ENCODE measurements at regions of chr2 and their contacts with region 1.

Region 1: DNA sequence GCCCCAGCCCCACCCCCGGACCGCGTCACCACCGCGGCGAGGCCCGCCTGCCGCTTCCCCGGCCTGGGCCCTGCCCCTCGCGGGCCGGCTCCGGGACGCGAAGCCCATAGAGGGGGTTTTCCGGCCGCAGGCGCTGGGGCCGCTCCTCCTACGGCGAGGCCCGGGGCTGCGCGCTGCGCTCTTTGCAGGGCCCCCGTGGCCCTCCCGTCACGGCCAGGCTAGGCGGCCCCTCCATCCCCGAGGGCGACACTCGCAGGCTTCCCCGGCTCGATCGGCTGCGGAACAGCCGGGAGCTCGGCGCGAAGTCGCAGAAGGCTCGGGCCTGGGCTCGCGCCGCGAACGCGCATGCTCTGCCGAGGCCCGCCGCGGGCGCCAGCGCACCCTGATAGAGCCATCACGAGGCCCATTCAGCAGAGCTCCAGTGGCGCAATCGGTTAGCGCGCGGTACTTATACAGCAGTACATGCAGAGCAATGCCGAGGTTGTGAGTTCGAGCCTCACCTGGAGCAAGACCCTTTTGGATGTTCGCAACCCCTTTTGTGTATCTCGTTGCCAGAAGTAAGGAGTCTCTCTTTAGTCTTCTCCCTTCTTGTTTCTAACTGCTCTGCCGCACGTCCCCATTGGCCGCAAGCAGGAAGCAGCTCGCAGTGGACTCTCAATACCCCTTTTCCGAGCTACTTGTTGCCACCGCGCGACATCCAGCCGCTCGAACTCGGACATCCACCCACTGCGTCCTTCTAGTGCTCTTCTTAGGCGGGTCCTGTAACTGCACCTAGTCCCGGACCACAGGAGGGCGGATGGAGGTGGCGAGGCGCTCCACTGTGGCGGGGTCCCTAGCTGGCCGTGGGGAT is 18.0 kb upstream of the HAAO start:
- DNase-seq: peak; percentile 98
- ATAC-seq: peak; percentile 78
- H3K4me3 ChIP-seq: peak overlapping the region; percentile 62 to 97 (median 84)
- H3K4me3 Mint-ChIP-seq: peak overlapping the region; percentile 100
- H3K27ac ChIP-seq: peak overlapping the region; percentile 95
- H3K27ac Mint-ChIP-seq: peak overlapping the region; percentile 99
- H3K4me1 ChIP-seq: peaks cover 4 to 17% of the 10 kb centered on the region in 2 donors
- H3K4me1 Mint-ChIP-seq: peaks cover 25% of the 10 kb centered on the region
- H3K27me3 ChIP-seq: no peaks in the 10 kb centered on the region
- H3K27me3 Mint-ChIP-seq: no peaks in the 10 kb centered on the region
- CTCF ChIP-seq: no peak

Region 2: GRCh38 chr2:42568401-42569115 is 241.8 kb before region 1 on chr2 and contains the start of gene MTA3:
- CTCF ChIA-PET with region 1: interaction called, 3 read pairs
- POLR2A ChIA-PET with region 1: no interaction called
- intact Hi-C with region 1: loop called (anchors 5 kb)
- DNase-seq: peak; percentile 74
- ATAC-seq: peak; percentile 67
- H3K4me3 ChIP-seq: peak within 1 kb of the TSS; percentile 26 to 80 (median 70)
- H3K4me3 Mint-ChIP-seq: peak within 1 kb of the TSS; percentile 96
- H3K27ac ChIP-seq: peak within 1 kb of the TSS; percentile 18 to 67
- H3K27ac Mint-ChIP-seq: peak within 1 kb of the TSS; percentile 90
- H3K4me1 ChIP-seq: peaks cover 21 to 26% of the 10 kb centered on the region in 2 donors
- H3K4me1 Mint-ChIP-seq: peaks cover 31% of the 10 kb centered on the region
- H3K27me3 ChIP-seq: no peaks in the 10 kb centered on the region
- H3K27me3 Mint-ChIP-seq: no peaks in the 10 kb centered on the region
- CTCF ChIP-seq: no peak
- total RNA-seq, gene MTA3: 33.2 and 40.1 TPM in 2 replicates

Region 3: DNA sequence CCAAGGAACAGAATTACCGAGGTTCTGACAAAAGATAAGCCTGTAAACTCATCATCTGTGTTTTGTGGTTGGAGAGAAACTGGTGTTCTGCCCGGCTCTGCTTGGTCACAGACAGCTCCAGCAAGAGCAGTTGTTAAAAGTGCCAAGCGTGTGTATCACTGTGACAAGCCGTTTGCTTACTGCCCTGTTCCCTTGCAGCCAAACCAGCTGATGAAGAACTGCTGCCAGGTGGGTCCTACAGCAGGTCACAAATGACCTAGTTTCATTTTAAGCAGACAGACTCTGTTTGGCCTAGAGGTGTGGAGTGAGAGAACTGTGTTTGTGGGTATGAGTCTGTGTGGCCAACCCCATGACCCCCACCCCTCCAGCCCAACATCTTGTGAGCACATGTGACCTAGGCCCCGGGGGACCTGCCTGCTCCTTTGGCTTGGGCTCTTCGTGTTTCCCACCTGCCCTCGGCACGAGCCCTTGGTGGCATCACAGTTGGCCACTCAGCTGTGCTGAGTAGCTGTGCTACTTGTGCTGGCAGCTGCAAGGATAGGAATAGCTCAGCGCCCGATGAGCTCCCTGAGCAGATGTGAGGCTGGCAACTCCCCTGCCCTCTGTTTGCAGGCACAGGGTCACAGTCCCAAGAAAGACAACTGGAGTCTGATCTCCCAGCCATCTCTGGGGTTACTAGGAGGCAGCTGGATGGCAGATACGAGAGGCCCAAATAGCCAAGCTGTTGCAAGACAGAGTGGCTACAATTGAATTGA is 56.1 kb before region 1 on chr2:
- CTCF ChIA-PET with region 1: interaction called, 5 read pairs
- POLR2A ChIA-PET with region 1: interaction called, 15 read pairs
- intact Hi-C with region 1: loop called (anchors 1 kb)
- DNase-seq: peak; percentile 85
- ATAC-seq: peak; percentile 81
- H3K4me3 ChIP-seq: peak overlapping the region in 2 of 5 experiments; percentile 19 to 38
- H3K4me3 Mint-ChIP-seq: peak overlapping the region; percentile 78
- H3K27ac ChIP-seq: peak overlapping the region; percentile 37 to 50
- H3K27ac Mint-ChIP-seq: peak overlapping the region; percentile 89
- H3K4me1 ChIP-seq: peaks cover 46 to 47% of the 10 kb centered on the region in 2 donors
- H3K4me1 Mint-ChIP-seq: peaks cover 47% of the 10 kb centered on the region
- H3K27me3 ChIP-seq: no peaks in the 10 kb centered on the region
- H3K27me3 Mint-ChIP-seq: no peaks in the 10 kb centered on the region
- CTCF ChIP-seq: no peak

Region 4: DNA sequence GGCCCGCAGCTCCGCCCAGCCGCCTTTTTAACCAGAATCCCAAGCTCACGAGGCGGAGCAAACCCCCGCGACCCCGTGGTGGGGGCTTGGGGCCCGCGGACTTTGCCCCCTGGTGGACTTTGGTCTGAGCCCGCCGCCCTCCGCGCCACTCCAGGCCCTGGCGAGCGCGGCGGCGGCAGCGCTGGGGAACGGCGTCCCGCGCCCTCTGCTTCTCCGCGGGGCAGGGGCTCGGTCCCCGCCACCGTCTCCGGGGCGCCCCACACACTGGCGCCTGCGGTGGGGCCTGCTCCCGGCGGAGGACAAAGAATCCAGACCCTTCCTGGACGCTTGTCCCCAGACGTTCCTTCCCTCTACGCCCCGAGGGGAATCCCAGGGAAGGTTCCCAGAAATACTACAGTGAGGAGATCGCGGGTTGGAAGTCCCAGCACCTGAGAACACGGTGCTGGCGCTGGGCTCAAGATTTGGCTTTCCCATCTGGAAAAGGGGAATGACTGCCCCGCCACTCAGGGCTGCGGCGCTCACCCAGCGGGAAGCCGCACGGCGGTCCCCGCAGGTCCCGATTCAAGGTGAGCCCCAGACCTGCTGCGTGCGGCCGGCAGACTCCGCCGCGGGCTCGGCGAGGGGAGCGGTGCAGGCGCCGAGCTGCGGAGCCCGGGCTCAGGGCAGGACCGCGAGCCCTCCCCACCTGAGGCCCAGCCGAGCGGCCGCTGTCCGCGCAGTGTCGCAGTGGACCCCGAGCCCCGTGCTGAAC is 17.6 kb before region 1 on chr2 and contains the start of gene HAAO:
- CTCF ChIA-PET with region 1: interaction called, 64 read pairs
- POLR2A ChIA-PET with region 1: interaction called, 82 read pairs
- intact Hi-C with region 1: loop called (anchors 1 kb)
- DNase-seq: peak; percentile 74
- ATAC-seq: peak; percentile 61
- H3K4me3 ChIP-seq: peak within 1 kb of the TSS; percentile 47 to 93 (median 76)
- H3K4me3 Mint-ChIP-seq: peak within 1 kb of the TSS; percentile 87
- H3K27ac ChIP-seq: peak within 1 kb of the TSS; percentile 49 to 69
- H3K27ac Mint-ChIP-seq: peak within 1 kb of the TSS; percentile 89
- H3K4me1 ChIP-seq: peaks cover 18 to 37% of the 10 kb centered on the region in 2 donors
- H3K4me1 Mint-ChIP-seq: peaks cover 46% of the 10 kb centered on the region
- H3K27me3 ChIP-seq: no peaks in the 10 kb centered on the region
- H3K27me3 Mint-ChIP-seq: no peaks in the 10 kb centered on the region
- CTCF ChIP-seq: peak; percentile 11
- total RNA-seq, gene HAAO: 17.6 and 21.0 TPM in 2 replicates

Region 5: DNA sequence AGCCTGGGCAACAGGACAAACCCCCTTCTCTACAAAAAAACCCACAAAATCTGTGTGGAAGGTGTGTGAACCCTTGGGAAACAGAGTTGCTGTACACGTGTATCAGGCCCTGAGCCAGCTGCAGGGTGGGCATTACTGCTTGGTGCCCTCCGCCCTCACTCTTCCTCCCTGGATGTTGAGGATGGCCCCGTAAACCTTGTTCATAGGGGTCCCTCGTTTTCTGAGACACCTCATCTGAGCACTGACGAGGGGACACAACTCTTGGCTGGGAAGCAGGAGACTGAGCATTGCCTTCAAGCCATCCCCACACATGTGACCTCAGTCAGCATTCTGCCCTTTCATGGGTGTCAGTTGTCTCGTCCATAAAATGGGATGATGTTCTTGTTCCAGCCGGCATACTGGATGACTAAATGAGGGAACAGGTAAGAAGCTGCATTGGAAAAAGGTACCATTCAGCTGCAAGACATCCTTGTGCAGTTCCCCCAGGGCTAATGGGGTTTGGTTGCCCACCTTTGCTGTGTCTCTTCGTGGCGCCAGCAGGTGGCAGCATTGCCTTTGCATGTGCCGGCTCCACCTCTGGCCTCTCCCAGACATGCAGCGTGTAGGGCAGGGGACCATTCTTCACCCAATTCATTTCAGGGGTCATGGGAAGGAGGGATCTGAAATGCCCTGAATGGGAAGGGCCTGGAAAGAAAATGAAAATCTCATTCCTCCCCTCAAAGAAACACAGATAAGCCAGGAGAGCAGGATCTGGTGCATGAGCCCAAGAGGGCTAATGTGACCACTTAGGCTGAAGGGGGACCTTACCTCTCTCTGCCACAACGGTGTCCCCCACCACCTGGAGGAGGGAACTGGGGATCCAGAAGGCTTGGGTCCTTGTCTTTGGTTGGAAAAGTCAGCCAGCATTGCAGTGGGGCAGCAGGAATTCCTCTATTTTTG is 18.4 kb after region 1 on chr2:
- CTCF ChIA-PET with region 1: interaction called, 17 read pairs
- POLR2A ChIA-PET with region 1: interaction called, 3 read pairs
- intact Hi-C with region 1: loop called (anchors 2 kb)
- DNase-seq: peak; percentile 82
- ATAC-seq: peak; percentile 95
- H3K4me3 ChIP-seq: no peak overlapping the region
- H3K4me3 Mint-ChIP-seq: peak overlapping the region; percentile 39
- H3K27ac ChIP-seq: no peak overlapping the region
- H3K27ac Mint-ChIP-seq: peak overlapping the region; percentile 26
- H3K4me1 ChIP-seq: peaks cover 8 to 13% of the 10 kb centered on the region in 2 donors
- H3K4me1 Mint-ChIP-seq: peaks cover 16% of the 10 kb centered on the region
- H3K27me3 ChIP-seq: no peaks in the 10 kb centered on the region
- H3K27me3 Mint-ChIP-seq: peaks cover 3% of the 10 kb centered on the region
- CTCF ChIP-seq: peak; percentile 92

Region 6: GRCh38 chr2:43595603-43596412 is 785.5 kb after region 1 on chr2 and contains the start of gene THADA:
- CTCF ChIA-PET with region 1: interaction called, 3 read pairs
- POLR2A ChIA-PET with region 1: interaction called, 6 read pairs
- intact Hi-C with region 1: loop called (anchors 1 kb)
- DNase-seq: peak; percentile 98
- ATAC-seq: peak; percentile 98
- H3K4me3 ChIP-seq: peak within 1 kb of the TSS; percentile 69 to 94 (median 80)
- H3K4me3 Mint-ChIP-seq: peak within 1 kb of the TSS; percentile 98
- H3K27ac ChIP-seq: peak within 1 kb of the TSS; percentile 94
- H3K27ac Mint-ChIP-seq: peak within 1 kb of the TSS; percentile 96
- H3K4me1 ChIP-seq: peaks cover 12 to 21% of the 10 kb centered on the region in 2 donors
- H3K4me1 Mint-ChIP-seq: peaks cover 24% of the 10 kb centered on the region
- H3K27me3 ChIP-seq: no peaks in the 10 kb centered on the region
- H3K27me3 Mint-ChIP-seq: peaks cover 3% of the 10 kb centered on the region
- CTCF ChIP-seq: no peak
- total RNA-seq, gene THADA: 48.5 and 53.7 TPM in 2 replicates

Region 7: DNA sequence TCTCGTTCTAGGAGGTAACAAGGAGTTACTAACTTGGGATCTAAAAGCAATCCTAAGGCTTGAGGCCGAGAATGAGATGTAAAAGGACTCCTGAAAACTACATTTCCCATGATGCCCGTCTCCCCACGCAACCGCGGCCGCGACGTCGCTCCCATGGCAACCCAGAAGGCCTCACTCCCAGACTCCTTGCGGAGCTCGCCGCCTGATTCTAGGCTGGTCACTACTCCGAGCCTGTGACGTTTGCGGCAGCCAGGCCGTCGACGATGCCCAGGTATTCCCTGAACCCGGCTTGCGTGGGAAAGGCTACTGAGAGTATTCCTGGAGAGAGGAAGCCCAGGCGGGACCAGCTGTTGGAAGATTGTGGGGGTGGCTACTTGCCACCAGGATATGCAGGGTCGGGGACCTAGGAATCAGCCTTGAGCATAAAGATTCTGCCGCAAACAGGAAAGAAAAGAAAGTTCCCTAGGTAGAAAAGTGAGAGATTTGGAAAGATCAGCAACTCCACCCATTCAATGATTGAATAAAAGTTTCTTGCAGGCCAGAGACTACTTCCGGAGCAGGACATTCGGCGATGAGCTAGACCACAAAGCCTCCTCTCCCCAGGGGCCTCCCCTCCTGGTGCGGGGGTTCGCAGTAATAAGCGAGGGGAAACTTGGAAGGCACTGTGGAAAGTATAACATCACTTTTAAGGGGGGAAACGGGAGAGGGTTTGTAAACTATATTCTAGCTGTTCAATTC is 963.7 kb after region 1 on chr2 and contains the start of gene DYNC2LI1:
- CTCF ChIA-PET with region 1: no interaction called
- POLR2A ChIA-PET with region 1: no interaction called
- intact Hi-C with region 1: loop called (anchors 5 kb)
- DNase-seq: peak; percentile 83
- ATAC-seq: peak; percentile 99
- H3K4me3 ChIP-seq: peak within 1 kb of the TSS; percentile 76 to 89 (median 82)
- H3K4me3 Mint-ChIP-seq: peak within 1 kb of the TSS; percentile 98
- H3K27ac ChIP-seq: peak within 1 kb of the TSS in 1 of 2 donors; percentile 69
- H3K27ac Mint-ChIP-seq: peak within 1 kb of the TSS; percentile 82
- H3K4me1 ChIP-seq: peaks cover 0 to 11% of the 10 kb centered on the region in 2 donors
- H3K4me1 Mint-ChIP-seq: peaks cover 13% of the 10 kb centered on the region
- H3K27me3 ChIP-seq: no peaks in the 10 kb centered on the region
- H3K27me3 Mint-ChIP-seq: peaks cover 16% of the 10 kb centered on the region
- CTCF ChIP-seq: no peak
- total RNA-seq, gene DYNC2LI1: 11.4 and 12.7 TPM in 2 replicates

Measured in B cell (primary cell).